ENCODE measurements at regions of chr20 and their contacts with region 1.

Region 1: DNA sequence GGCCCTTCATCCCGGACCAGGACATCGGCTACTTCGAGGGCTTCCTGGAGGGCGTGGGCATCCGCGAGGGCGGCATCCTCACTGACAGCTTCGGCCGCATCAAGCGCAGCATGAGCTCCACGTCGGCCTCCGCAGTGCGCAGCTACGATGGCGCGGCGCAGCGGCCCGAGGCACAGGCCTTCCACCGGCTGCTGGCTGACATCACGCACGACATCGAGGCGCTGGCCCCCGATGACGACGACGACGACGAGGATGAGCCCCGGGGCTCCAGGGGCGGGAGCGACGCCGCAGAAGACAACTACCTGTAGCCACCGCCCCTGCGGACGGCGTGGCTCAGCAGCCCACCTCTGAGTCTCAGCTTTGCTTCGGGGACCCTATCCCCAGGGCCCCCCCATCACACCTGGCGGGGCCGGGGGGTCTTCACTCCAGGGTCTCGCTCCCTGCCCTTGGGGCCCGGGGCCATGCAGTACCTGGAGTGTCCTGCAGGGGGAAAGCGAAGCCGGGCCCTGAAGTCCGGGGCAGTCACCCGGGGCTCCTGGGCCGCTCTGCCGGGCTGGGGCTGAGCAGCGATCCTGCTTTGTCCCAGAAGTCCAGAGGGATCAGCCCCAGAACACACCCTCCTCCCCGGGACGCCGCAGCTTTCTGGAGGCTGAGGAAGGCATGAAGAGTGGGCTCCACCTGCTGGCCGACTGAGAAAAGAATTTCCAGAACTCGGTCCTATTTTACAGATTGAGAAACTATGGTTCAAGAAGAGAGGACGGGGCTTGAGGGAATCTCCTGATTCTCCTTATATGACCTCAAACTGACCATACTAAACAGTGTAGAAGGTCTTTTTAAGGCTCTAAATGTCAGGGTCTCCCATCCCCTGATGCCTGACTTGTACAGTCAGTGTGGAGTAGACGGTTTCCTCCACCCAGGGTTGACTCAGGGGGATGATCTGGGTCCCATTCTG is 20.8 kb upstream of the HCK start:
- DNase-seq: peak; percentile 77 to 78
- ATAC-seq: peak; percentile 96

Region 2: GRCh38 chr20:31822421-31823330 is 208.6 kb before region 1 on chr20:
- intact Hi-C with region 1: loop called (anchors 5 to 10 kb)
- DNase-seq: peak; percentile 51 to 67
- ATAC-seq: peak; percentile 84

Measured in left colon (tissue), 2 donors.